CD4-positive, alpha-beta T cell (primary cell): ENCODE measurements at regions of chr17 and their contacts with region 1.

Region 1: DNA sequence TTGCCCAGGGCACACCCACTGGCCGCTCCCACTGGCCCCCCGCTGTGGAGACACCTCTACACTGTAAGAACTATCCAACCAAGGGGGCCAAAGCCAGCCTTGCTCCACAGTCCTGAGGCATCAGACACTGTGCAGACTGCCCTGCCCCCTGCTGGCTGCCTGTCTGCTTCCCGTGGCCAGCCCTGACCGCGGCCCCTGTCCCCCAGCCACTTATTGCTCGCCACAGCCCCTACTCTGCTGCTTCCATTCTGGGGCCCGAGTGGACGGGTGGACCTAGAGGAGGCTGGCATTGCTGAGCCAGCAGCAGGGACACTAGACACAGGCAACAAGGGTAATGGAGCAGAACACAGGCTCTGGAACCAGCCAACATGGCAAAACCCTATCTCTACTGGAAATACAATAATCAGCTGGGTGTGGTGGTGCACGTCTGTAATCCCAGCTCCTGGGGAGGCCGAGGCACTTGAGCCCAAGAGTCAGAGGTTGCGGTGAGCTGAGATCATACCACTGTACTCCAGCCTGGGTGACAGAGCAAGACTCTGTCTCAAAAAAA is 19.7 kb upstream of the LRRC37A3 start:
- DNase-seq: peak in 11 of 14 experiments; percentile 14 to 64 (median 36)
- ATAC-seq: no peak
- H3K4me3 ChIP-seq: no peak overlapping the region
- H3K4me3 Mint-ChIP-seq: no peak overlapping the region
- H3K27ac ChIP-seq: no peak overlapping the region
- H3K27ac Mint-ChIP-seq: no peak overlapping the region
- H3K4me1 ChIP-seq: peaks cover 5% of the 10 kb centered on the region
- H3K4me1 Mint-ChIP-seq: no peaks in the 10 kb centered on the region
- H3K27me3 ChIP-seq: no peaks in the 10 kb centered on the region
- H3K27me3 Mint-ChIP-seq: no peaks in the 10 kb centered on the region
- CTCF ChIP-seq: peak; percentile 36

Region 2: GRCh38 chr17:64920026-64920418 is 19.0 kb before region 1 on chr17:
- CTCF ChIA-PET with region 1: interaction called, 10 read pairs
- POLR2A ChIA-PET with region 1: interaction called, 3 read pairs
- intact Hi-C with region 1: no loop called
- DNase-seq: peak in 2 of 14 experiments; percentile 14 to 39
- ATAC-seq: no peak
- H3K4me3 ChIP-seq: peak overlapping the region; percentile 60
- H3K4me3 Mint-ChIP-seq: peak overlapping the region; percentile 91
- H3K27ac ChIP-seq: peak overlapping the region in 1 of 2 donors; percentile 65
- H3K27ac Mint-ChIP-seq: peak overlapping the region; percentile 83
- H3K4me1 ChIP-seq: peaks cover 13% of the 10 kb centered on the region
- H3K4me1 Mint-ChIP-seq: no peaks in the 10 kb centered on the region
- H3K27me3 ChIP-seq: no peaks in the 10 kb centered on the region
- H3K27me3 Mint-ChIP-seq: no peaks in the 10 kb centered on the region
- CTCF ChIP-seq: no peak

Region 3: GRCh38 chr17:65109990-65110680 is 171.1 kb after region 1 on chr17:
- CTCF ChIA-PET with region 1: no interaction called
- POLR2A ChIA-PET with region 1: no interaction called
- intact Hi-C with region 1: no loop called
- DNase-seq: no peak
- ATAC-seq: no peak
- H3K4me3 ChIP-seq: no peak overlapping the region
- H3K4me3 Mint-ChIP-seq: no peak overlapping the region
- H3K27ac ChIP-seq: no peak overlapping the region
- H3K27ac Mint-ChIP-seq: no peak overlapping the region
- H3K4me1 ChIP-seq: no peaks in the 10 kb centered on the region
- H3K4me1 Mint-ChIP-seq: no peaks in the 10 kb centered on the region
- H3K27me3 ChIP-seq: no peaks in the 10 kb centered on the region
- H3K27me3 Mint-ChIP-seq: peaks cover 9% of the 10 kb centered on the region
- CTCF ChIP-seq: no peak